Dorsolateral prefrontal cortex (tissue), 120 donors: ENCODE measurements at regions of chr17 and their contacts with region 1.

Region 1: DNA sequence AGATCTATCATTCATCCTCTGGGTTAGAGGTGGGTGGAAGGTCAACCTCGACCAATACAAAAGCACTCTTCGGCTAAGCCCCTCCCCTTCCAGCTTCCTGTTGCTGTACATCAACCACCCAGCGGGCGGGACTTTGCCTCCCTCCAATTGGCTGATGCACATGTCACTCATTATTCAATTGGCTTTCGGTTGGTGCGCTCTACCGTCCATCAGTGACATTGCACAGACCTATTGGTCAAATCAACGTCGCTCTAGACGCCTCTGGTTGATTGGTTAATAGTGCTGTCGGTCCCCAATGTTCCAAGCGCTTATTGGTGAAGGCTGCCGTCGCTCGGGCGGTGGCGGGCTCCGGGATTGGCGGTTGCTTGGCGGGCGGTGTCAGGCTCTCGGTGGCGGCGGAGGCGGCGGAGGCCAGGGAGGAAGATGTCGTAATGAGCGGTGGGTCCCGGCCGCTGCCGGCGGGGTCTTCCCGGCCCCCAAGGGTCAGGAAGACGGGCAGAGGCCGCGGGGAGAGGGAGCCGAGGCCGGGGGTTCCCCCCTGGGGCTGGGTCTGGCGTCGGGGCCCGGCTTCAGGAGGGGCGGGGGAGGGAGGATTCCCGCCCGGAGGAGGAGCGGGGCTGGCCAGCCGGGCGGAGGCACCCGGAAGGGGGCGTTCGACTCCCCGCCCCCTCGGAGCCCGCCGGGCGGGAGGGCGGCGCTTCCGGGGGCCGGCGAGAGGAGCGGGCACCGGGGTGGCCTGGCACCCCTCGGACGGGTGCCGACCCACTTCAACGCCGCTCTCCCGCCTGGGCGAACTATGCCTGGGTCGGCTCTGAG is at the start of gene SP2:
- DNase-seq: peak; percentile 94 to 99 (median 98)
- H3K4me3 ChIP-seq: peak within 1 kb of the TSS; percentile 66 to 100 (median 92)
- H3K27ac ChIP-seq: peak within 1 kb of the TSS; percentile 96 to 100 (median 100)
- H3K27me3 ChIP-seq: no peaks in the 10 kb centered on the region
- CTCF ChIP-seq: peak in 44 of 56 donors; percentile 8 to 59 (median 31)
- total RNA-seq, gene SP2: 11.5 to 27.4 (median 17.6) TPM

Region 2: DNA sequence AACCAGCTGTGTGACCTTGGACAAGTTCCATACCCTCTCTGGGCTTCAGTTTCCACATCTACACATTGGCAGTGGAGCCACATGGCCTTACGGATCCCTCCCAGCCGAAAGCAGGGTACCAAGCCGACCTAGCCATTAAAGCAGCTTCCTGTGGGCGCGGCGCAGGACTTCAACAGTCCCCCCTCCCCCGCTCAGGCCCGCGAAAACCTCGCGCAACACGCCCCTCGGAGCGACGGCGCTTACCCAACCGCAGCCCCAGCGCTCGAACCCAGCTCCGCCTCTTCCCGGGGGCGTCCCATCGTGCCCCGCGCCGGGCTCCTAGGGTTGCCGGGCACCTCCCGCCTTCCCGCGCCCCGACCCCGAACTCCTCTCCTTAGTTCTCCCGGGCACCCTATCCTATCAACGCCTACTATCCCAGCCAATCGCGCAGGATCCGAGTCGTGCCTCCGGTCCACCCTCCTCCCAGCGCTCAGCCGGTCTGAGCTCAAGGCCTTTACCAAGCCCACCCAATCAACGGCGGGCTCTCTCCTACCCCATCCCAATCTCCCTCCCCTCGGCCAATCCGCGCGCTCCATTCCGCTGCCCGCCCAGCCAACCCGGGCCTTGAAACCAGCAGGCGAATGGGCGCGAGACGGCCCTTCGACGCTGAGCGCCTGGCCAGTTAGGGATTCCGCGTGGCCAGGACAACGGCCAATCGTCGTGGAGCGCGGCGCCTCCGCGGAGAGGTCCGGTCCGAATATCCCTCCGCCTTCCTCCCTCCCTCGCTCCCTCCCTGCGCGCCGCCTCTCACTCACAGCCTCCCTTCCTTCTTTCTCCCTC is 246.7 kb before region 1 on chr17 and contains the start of gene KPNB1:
- intact Hi-C with region 1: loop called in 1 of 2 experiments (anchors 10 kb)
- DNase-seq: peak; percentile 96 to 100 (median 99)
- H3K4me3 ChIP-seq: peak within 1 kb of the TSS; percentile 66 to 97 (median 87)
- H3K27ac ChIP-seq: peak within 1 kb of the TSS; percentile 61 to 96 (median 92)
- H3K27me3 ChIP-seq: no peaks in the 10 kb centered on the region
- CTCF ChIP-seq: peak in 11 of 56 donors; percentile 2 to 34 (median 14)
- total RNA-seq, gene KPNB1: 131 to 228 (median 183) TPM

Region 3: DNA sequence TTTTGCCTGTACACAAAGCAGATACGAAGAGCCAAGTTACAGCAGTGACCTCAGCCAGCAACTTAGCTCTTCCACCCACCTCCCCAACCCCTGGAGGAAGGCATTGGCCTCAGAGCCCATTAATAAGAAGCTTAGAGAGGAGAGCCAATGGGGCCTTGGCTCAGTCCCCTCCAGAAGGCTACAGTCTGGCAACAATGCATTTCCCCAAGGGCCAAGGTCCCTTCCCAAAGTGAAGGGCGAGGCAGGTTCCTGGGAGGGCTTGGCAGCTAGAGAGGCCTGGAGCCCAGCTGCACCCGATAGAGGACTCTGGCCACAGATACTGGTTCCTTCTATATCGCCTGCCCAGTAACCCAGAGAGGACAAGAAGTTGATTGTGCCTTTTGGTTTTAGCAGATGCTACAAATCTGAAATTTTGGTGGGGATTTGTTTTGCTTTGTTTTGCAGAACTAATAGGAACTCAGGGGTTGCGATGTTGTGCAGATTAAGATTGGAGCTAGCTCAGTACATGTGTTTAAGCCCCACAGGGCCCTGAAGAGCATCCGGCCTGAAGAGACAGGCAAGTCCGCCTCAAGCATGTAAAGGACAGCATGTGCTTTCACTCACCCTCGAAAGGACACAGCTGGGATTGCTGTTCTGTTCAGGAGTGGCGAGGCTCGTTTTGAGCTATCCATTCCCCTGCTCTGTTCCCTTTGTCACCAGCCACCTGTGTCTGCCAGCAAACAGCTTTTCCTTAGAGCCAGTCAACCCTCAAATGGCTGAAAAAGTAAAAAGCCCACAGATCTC is 33.3 kb after region 1 on chr17:
- intact Hi-C with region 1: no loop called
- DNase-seq: no peak
- H3K4me3 ChIP-seq: no peak overlapping the region
- H3K27ac ChIP-seq: peak overlapping the region; percentile 7 to 91 (median 71)
- H3K27me3 ChIP-seq: no peaks in the 10 kb centered on the region
- CTCF ChIP-seq: no peak

Region 4: GRCh38 chr17:47941236-47941994 is 45.4 kb after region 1 on chr17 and contains the start of gene PNPO:
- intact Hi-C with region 1: loop called (anchors 2 to 5 kb)
- DNase-seq: peak; percentile 79 to 98 (median 96)
- H3K4me3 ChIP-seq: peak within 1 kb of the TSS; percentile 68 to 100 (median 90)
- H3K27ac ChIP-seq: peak within 1 kb of the TSS in 56 of 59 donors; percentile 32 to 93 (median 79)
- H3K27me3 ChIP-seq: no peaks in the 10 kb centered on the region
- CTCF ChIP-seq: peak in 37 of 56 donors; percentile 5 to 58 (median 28)
- total RNA-seq, gene PNPO: 30.2 to 62.6 (median 43.4) TPM

Region 5: GRCh38 chr17:47981462-47981861 is 85.4 kb after region 1 on chr17:
- intact Hi-C with region 1: no loop called
- DNase-seq: no peak
- H3K4me3 ChIP-seq: no peak overlapping the region
- H3K27ac ChIP-seq: no peak overlapping the region
- H3K27me3 ChIP-seq: no peaks in the 10 kb centered on the region
- CTCF ChIP-seq: no peak

Region 6: GRCh38 chr17:48131216-48131824 is 235.3 kb after region 1 on chr17:
- intact Hi-C with region 1: no loop called
- DNase-seq: peak in 4 of 10 donors; percentile 38 to 60 (median 53)
- H3K4me3 ChIP-seq: no peak overlapping the region
- H3K27ac ChIP-seq: no peak overlapping the region
- H3K27me3 ChIP-seq: no peaks in the 10 kb centered on the region
- CTCF ChIP-seq: peak; percentile 50 to 95 (median 87)